AG04450 (cell line): ENCODE measurements at regions of chr6 and their contacts with region 1.

Region 1: GRCh38 chr6:31197559-31198305 is 27.2 kb upstream of the POU5F1 start:
- DNase-seq: no peak
- H3K4me3 ChIP-seq: peak overlapping the region; percentile 80
- H3K27ac ChIP-seq: peak overlapping the region; percentile 80
- H3K27me3 ChIP-seq: no peaks in the 10 kb centered on the region
- CTCF ChIP-seq: no peak

Region 2: GRCh38 chr6:31128093-31128676 is 69.5 kb before region 1 on chr6:
- CTCF ChIA-PET with region 1: interaction called, 64 read pairs
- POLR2A ChIA-PET with region 1: no interaction called
- DNase-seq: no peak
- H3K4me3 ChIP-seq: no peak overlapping the region
- H3K27ac ChIP-seq: no peak overlapping the region
- H3K27me3 ChIP-seq: peaks cover 13% of the 10 kb centered on the region
- CTCF ChIP-seq: peak; percentile 88

Region 3: GRCh38 chr6:31139599-31139998 is 58.1 kb before region 1 on chr6:
- CTCF ChIA-PET with region 1: interaction called, 64 read pairs
- POLR2A ChIA-PET with region 1: no interaction called
- DNase-seq: no peak
- H3K4me3 ChIP-seq: no peak overlapping the region
- H3K27ac ChIP-seq: no peak overlapping the region
- H3K27me3 ChIP-seq: no peaks in the 10 kb centered on the region
- CTCF ChIP-seq: no peak

Region 4: GRCh38 chr6:31158140-31158862 is 39.4 kb before region 1 on chr6 and contains the start of gene TCF19:
- CTCF ChIA-PET with region 1: interaction called, 12 read pairs
- POLR2A ChIA-PET with region 1: interaction called, 4 read pairs
- DNase-seq: peak; percentile 98
- H3K4me3 ChIP-seq: peak within 1 kb of the TSS; percentile 82
- H3K27ac ChIP-seq: peak within 1 kb of the TSS; percentile 47
- H3K27me3 ChIP-seq: no peaks in the 10 kb centered on the region
- CTCF ChIP-seq: no peak
- polyA plus RNA-seq, gene TCF19: 3.4 and 4.2 TPM in 2 replicates

Region 5: GRCh38 chr6:31366693-31367470 is 169.2 kb after region 1 on chr6:
- CTCF ChIA-PET with region 1: interaction called, 75 read pairs
- POLR2A ChIA-PET with region 1: no interaction called
- DNase-seq: peak; percentile 74
- H3K4me3 ChIP-seq: peak overlapping the region; percentile 42
- H3K27ac ChIP-seq: no peak overlapping the region
- H3K27me3 ChIP-seq: peaks cover 29% of the 10 kb centered on the region
- CTCF ChIP-seq: peak; percentile 96